CD14-positive monocyte (primary cell): ENCODE measurements at regions of chr13 and their contacts with region 1.

Region 1: DNA sequence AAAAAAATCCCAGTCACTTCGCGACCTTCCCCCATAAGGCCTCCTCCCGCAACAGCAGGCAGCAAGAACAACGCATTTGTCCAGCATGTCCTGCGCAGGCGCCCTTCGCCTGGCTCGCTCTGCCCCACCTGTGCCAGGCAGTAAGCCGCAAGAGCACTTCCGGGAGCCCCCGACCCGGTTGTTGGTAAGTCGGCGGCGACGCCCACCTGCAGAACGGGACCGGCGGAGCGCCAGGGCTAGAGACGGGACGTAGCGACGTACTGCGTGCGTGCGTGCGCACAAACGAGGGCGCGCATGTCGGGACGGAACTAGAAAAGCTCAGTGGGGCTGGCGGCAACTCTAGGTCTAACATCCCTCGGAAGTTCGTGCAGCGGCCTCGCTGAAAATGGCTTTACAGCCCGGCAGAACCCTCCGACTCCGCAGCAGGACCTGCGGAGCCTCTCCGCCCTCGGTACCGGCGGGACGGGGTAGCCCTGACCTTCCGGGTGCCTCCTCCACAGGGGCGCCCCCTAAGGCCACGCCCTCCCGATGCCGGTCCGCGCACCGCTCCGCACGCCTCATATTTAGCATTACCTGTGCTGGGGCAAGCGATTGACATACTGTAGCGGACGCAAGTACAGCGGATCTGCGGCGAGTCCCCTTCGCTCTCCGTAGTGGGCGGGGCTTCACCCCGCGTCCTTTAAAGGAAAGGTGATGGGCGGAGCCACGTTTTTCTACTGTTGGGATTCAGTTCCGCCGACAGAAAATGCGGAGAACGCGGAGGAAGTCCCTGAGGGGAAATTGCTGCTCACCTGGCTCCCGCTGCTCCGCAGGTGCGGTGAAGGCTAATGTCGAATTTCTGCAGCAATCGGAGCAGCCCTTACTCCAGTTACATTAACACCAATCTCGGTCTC is at the start of gene MTIF3:
- DNase-seq: peak; percentile 85 to 87 (median 85)
- H3K4me3 ChIP-seq: peak within 1 kb of the TSS; percentile 83 to 89 (median 86)
- H3K4me3 Mint-ChIP-seq: peak within 1 kb of the TSS; percentile 96 to 97
- H3K27ac ChIP-seq: peak within 1 kb of the TSS; percentile 93 to 95
- H3K27ac Mint-ChIP-seq: peak within 1 kb of the TSS; percentile 92 to 98 (median 96)
- H3K4me1 ChIP-seq: peaks cover 22 to 40% of the 10 kb centered on the region in 2 donors
- H3K4me1 Mint-ChIP-seq: peaks cover 42% of the 10 kb centered on the region
- H3K27me3 ChIP-seq: no peaks in the 10 kb centered on the region
- H3K27me3 Mint-ChIP-seq: peaks cover 1 to 5% (median 4%) of the 10 kb centered on the region in 3 donors
- CTCF ChIP-seq: no peak
- polyA plus RNA-seq, gene MTIF3: 61.6 to 135 (median 86.6) TPM

Region 2: DNA sequence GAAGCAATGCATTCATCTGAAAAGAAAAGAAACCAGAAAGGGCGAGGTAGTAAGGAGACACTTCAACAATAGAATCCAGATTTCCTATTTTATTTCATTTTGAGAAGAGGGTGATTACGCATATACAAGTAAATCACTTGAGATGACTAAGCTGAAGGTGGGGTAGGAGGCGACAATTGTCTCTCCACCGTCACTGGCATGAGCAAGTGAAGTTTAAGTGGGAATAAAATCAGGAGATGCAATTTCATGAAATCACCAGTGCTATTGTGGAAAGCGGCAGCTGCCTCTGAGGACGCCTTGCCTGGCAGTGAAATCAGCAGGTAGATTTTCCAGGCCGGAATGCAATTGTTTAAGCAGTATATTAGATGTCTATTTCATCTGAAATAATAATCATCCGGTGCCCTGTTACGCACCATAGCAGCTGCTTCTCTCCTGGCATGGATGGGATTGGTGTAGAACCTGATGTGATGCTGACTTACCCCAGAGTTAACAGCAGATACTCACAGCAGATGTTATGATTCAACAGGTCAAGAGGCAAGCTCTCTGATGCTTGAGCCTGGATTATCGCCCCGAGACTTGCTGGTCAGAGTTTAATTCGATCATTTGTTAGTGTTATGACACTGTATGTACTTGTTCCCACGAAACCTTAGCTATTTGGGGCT is 115.3 kb before region 1 on chr13:
- intact Hi-C with region 1: no loop called
- DNase-seq: no peak
- H3K4me3 ChIP-seq: no peak overlapping the region
- H3K4me3 Mint-ChIP-seq: no peak overlapping the region
- H3K27ac ChIP-seq: no peak overlapping the region
- H3K27ac Mint-ChIP-seq: no peak overlapping the region
- H3K4me1 ChIP-seq: no peaks in the 10 kb centered on the region
- H3K4me1 Mint-ChIP-seq: no peaks in the 10 kb centered on the region
- H3K27me3 ChIP-seq: no peaks in the 10 kb centered on the region
- H3K27me3 Mint-ChIP-seq: peaks cover 7 to 24% (median 8%) of the 10 kb centered on the region in 3 donors
- CTCF ChIP-seq: no peak

Region 3: GRCh38 chr13:27406178-27406939 is 43.8 kb before region 1 on chr13:
- intact Hi-C with region 1: loop called in 1 of 2 experiments (anchors 5 kb)
- DNase-seq: peak; percentile 41 to 54 (median 47)
- H3K4me3 ChIP-seq: no peak overlapping the region
- H3K4me3 Mint-ChIP-seq: no peak overlapping the region
- H3K27ac ChIP-seq: no peak overlapping the region
- H3K27ac Mint-ChIP-seq: peak overlapping the region in 1 of 7 donors; percentile 46
- H3K4me1 ChIP-seq: peaks cover 2 to 5% of the 10 kb centered on the region in 2 donors
- H3K4me1 Mint-ChIP-seq: peaks cover 7% of the 10 kb centered on the region
- H3K27me3 ChIP-seq: no peaks in the 10 kb centered on the region
- H3K27me3 Mint-ChIP-seq: peaks cover 6 to 13% (median 7%) of the 10 kb centered on the region in 3 donors
- CTCF ChIP-seq: peak; percentile 72

Region 4: DNA sequence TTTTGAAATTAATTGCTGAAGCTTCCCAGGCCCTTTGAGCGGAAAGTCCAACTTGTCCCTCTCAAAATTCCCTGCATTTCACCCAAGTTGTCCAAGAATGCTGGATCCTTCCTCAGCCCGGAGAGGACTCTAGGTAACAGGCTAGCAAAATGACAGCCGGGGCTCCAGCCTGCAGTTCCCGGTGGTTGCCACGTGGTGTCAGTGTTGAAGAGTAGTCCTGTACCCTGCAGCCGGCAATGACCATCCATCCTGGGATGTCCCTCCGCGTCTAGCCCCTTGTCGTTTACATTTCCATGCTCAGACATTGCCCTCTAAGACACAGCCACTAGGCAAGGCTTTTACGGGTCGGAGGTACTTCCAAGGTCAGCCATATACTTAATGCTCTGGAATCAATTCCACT is 31.6 kb after region 1 on chr13:
- intact Hi-C with region 1: loop called in 1 of 2 experiments (anchors 1 kb)
- DNase-seq: peak in 2 of 3 donors; percentile 7 to 25
- H3K4me3 ChIP-seq: no peak overlapping the region
- H3K4me3 Mint-ChIP-seq: no peak overlapping the region
- H3K27ac ChIP-seq: no peak overlapping the region
- H3K27ac Mint-ChIP-seq: peak overlapping the region in 3 of 7 donors; percentile 74 to 97 (median 94)
- H3K4me1 ChIP-seq: peaks cover 22 to 29% of the 10 kb centered on the region in 2 donors
- H3K4me1 Mint-ChIP-seq: peaks cover 28% of the 10 kb centered on the region
- H3K27me3 ChIP-seq: no peaks in the 10 kb centered on the region
- H3K27me3 Mint-ChIP-seq: peaks cover 0 to 4% (median 4%) of the 10 kb centered on the region in 3 donors
- CTCF ChIP-seq: peak; percentile 62